Activated naive CD4-positive, alpha-beta T cell treated with anti-CD3 and anti-CD28 coated beads for 36 hours (primary cell): ENCODE measurements at regions of chr16 and their contacts with region 1.

Region 1: DNA sequence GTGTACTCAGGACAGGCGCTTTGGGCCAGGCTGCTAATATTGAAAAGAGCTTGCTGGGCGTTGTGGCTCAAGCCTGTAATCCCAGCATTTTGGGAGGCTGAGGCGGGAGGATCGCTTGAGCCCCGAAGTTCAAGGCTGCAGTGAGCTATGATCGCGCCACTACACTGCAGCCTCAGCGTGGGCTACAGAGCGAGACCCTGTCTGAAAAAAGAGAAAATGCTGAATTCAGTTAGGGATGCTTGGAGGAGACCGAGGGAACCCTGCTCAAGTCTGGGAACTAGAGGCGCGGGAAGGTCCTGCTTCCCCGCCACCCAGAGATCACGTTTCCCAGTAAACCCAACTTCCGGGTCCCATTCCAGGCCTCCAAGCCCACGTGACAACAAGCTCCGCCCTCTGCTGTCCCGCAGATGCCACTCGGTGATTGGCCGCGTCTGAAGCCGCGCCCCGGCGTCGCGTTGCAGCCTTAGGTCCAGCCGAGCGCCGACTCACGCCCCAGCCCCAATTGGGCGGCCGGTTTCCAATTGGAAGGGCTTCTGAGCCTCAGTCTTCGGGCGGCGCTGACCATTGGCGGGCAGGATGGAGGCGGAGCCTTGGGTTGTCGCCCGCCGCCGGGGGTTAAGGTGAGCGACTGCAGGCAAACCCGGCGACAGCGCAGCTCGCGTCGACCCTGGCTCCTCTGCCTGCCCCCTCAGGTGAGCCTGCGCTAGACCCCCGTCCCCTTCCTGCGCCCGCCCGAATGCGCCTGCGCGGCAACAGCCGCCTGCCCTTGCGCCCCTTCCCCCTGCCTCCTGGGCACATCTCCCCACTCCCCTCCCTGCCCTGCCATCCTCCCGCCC is at the start of gene PHKG2:
- DNase-seq: peak; percentile 99
- H3K4me3 Mint-ChIP-seq: peak within 1 kb of the TSS; percentile 89
- H3K27ac Mint-ChIP-seq: peak within 1 kb of the TSS; percentile 86
- H3K4me1 Mint-ChIP-seq: peaks cover 19% of the 10 kb centered on the region
- H3K27me3 Mint-ChIP-seq: no peaks in the 10 kb centered on the region
- total RNA-seq, gene PHKG2: 23.3 to 26.4 TPM

Region 2: DNA sequence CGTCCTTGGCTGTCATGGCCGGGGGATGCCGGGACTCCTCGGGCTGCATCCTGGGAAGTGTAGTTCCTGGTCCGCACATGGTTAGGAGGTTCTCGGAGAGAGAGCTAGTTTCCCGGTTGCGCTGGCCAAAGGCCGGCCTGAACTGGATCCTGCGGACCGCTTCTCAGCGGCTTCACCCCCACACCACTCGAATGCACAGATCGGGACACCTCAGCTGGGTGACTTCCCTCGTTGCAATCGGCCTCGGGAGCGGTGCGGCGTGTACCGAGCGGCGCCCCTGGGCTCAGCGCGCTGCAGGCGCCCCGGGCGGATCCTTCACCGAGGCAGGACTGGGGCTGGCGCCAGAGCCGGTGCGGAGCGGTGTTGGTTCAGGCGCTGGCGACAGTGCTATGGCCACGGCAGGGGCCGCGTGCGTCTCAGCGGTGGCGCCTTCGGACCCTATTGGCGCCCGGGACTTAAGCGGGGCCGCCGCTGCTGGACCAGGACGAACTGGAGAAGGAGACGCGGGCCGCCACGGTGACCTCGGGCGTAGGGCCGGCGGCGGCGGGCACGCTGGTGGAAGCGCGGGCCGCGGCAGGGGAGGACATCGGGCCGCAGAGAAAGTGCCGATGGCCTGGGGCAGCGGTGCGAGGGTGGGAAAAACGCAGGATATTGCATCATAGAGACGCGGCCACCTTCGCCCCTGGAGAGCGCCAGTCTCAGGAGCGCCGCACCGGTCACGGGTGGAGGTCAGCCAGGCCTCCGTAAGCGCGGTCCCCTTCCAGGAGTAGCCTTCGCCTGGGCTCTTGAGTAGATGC is 27.6 kb after region 1 on chr16:
- CTCF ChIA-PET with region 1: no interaction called
- intact Hi-C with region 1: loop called (anchors 1 kb)
- DNase-seq: peak; percentile 78
- H3K4me3 Mint-ChIP-seq: peak overlapping the region; percentile 95
- H3K27ac Mint-ChIP-seq: peak overlapping the region; percentile 93
- H3K4me1 Mint-ChIP-seq: peaks cover 17% of the 10 kb centered on the region
- H3K27me3 Mint-ChIP-seq: no peaks in the 10 kb centered on the region